H1 (cell line): ENCODE measurements at regions of chr12 and their contacts with region 1.

Region 1: DNA sequence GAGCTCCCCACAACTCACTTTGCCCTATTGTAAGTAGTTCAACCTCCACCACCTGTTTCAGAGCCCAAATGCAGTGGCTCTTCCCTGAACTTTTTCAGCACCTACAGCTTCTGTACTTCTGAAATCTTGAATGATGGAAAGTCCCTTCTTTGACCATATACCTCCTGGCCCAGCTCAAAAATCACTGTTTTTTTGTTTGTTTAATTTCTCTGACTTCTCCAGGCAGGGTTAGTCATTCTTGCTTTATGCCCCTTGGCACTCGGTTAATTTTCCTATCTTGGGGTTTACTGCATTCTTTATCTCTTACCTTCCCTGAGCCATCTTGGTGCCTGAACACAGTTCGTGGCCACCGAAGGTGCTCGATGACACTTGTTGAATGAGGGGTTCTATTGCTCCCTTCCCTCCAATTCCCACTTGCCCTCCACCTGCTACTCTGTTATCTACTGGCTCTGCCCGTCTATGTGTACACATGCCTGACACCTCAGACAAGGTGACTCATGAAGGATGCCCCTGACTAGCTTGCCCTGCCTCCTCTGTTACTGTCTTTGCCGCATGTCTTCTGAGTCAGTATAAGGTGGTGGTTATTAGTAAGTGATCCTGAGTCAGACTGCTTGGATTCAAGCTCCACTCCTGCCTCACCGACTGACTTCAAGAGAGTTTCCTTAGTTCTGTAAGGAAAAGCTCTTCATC is 4.4 kb downstream of the AMHR2 start:
- DNase-seq: no peak
- H3K4me3 ChIP-seq: no peak overlapping the region
- H3K27ac ChIP-seq: no peak overlapping the region
- H3K4me1 ChIP-seq: no peaks in the 10 kb centered on the region
- H3K27me3 ChIP-seq: no peaks in the 10 kb centered on the region
- CTCF ChIP-seq: no peak
- EP300 ChIP-seq: no peak
- POLR2A ChIP-seq: no peak
- RAD21 ChIP-seq: no peak

Region 2: DNA sequence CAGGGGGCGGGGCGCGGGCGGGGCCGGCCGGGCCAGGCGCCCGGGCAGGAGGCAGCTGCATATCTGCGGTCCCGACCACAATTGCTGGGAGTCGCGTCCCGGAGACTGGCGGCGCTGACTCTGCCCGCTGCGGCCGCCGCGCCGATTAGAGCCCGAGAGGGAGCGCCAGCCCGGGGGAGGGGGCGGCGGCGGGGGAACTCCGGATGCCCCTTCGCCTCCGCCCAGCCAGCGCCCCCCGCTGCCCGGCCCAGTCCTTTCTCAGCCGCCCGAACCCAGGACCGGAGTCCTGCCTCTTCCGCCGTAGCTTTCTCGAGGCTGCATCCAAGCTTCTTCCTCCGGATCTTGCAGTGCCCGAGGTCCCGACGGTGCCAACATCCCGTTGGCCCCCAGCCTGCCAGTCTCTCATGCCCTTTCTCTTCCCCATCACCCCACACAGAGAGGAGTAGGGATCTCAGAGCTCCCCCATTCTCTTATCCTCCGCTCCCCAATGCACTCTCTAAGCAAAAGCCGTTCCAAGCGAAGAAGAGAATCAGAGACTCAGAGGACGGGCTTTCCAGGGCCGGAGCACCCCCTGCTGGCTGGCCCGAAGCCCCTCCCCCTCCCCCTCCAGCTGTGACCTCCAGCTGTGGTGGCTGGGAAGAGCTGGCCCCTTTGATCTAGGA is 83.1 kb before region 1 on chr12:
- CTCF ChIA-PET with region 1: interaction called, 18 read pairs
- POLR2A ChIA-PET with region 1: interaction called, 4 read pairs
- DNase-seq: peak in 1 of 2 experiments; percentile 78
- H3K4me3 ChIP-seq: peak overlapping the region; percentile 37 to 80 (median 72)
- H3K27ac ChIP-seq: no peak overlapping the region
- H3K4me1 ChIP-seq: peaks cover 0 to 15% (median 8%) of the 10 kb centered on the region in 4 experiments; a peak in 5 of 7 replicates
- H3K27me3 ChIP-seq: peaks cover 3 to 13% (median 8%) of the 10 kb centered on the region in 4 experiments; a peak in 4 of 7 replicates
- CTCF ChIP-seq: peak in 2 of 3 experiments; percentile 12 to 24; a peak in 2 of 4 replicates
- EP300 ChIP-seq: no peak
- POLR2A ChIP-seq: 0 out of 3 replicates have a peak, but pooled peaks of 1 of the 2 experiments have one; percentile 32
- RAD21 ChIP-seq: peak in 1 of 2 experiments; percentile 35; a peak in 2 of 4 replicates

Region 3: DNA sequence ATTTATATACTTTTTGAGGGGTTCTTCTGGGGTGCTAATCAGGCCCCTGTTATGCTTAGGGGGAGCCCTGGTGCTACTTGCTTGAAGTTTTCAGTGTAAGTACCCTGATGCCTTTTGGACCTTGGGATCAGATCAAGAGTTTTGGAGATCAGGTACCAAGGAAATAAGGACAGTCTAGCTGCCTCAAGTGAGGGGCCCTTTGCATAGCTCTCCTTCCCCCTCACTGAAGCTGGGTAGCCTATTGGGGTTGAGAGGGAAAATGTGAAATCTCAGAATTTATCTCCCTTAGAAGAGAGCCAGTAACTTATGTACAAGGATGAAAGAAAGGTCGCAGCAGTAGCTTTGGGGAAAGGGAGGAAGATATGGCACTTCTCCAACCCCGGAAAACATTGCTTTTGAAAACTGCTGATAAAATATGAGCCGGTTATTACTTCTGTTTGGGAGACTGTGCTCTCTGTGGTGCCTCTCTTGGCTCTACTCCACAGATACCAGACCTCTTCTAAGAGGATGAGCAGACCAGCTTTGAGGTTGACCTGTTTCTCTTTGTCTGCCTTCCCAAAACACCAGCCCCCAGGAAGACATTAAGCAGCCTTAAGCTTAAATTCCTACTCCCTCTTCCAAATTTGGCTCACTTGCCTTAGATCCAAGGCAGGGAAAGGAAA is 13.2 kb before region 1 on chr12:
- CTCF ChIA-PET with region 1: interaction called, 23 read pairs
- POLR2A ChIA-PET with region 1: interaction called, 4 read pairs
- DNase-seq: no peak
- H3K4me3 ChIP-seq: no peak overlapping the region
- H3K27ac ChIP-seq: no peak overlapping the region
- H3K4me1 ChIP-seq: no peaks in the 10 kb centered on the region; a peak in 1 of 7 replicates
- H3K27me3 ChIP-seq: no peaks in the 10 kb centered on the region
- CTCF ChIP-seq: no peak
- EP300 ChIP-seq: no peak
- POLR2A ChIP-seq: no peak
- RAD21 ChIP-seq: no peak

Region 4: DNA sequence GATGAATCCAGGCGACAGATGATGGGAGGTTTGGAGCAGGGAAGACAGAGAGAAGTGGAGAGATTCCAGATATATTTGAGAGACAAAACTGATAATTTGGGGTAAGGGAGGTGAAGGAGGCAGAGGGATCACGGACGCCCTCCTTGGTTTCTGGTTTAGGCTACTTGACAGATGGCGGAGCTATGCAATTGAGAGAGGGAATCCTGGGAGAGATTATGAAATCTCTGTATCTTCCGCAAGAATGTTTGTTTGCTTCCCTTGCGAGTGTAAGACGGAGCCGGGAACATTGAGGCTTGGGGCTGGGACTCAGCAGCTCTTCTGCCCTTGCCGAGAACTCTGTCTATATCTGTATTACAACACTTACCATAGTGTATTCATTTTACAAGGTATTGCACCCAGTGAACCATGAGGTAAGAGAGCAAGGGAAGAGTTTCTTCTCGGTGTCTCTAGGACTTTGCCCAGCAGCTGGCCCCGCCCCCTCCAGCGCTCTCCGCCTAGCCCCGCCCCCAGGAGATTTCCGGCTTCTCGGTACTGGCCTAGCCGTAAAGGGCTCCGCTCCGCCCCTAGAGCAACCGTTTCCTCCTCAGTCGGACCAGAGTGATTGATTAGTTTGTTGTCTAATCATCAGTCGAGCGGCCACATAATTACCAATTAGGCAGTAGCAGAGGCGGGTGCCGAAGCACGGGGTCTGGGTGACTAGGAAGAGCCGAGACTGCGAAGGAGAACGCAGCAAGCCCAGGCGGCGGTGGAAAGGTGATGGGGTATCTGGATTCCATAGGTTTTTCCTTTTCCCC is 13.2 kb after region 1 on chr12 and contains the start of gene PRR13:
- CTCF ChIA-PET with region 1: interaction called, 3 read pairs
- POLR2A ChIA-PET with region 1: interaction called, 21 read pairs
- DNase-seq: peak; percentile 95 to 96
- H3K4me3 ChIP-seq: peak within 1 kb of the TSS; percentile 69 to 99 (median 88)
- H3K27ac ChIP-seq: peak within 1 kb of the TSS; percentile 30; the same call in 1 of the 2 replicates
- H3K4me1 ChIP-seq: peaks cover 0 to 8% (median 3%) of the 10 kb centered on the region in 4 experiments; a peak in 4 of 7 replicates
- H3K27me3 ChIP-seq: no peaks in the 10 kb centered on the region
- CTCF ChIP-seq: no peak
- EP300 ChIP-seq: no peak
- POLR2A ChIP-seq: peak; percentile 77 to 91
- RAD21 ChIP-seq: no peak
- total RNA-seq, gene PRR13: 164 and 185 TPM in 2 replicates